H1 (cell line): ENCODE measurements at regions of chr14 and their contacts with region 1.

Region 1: DNA sequence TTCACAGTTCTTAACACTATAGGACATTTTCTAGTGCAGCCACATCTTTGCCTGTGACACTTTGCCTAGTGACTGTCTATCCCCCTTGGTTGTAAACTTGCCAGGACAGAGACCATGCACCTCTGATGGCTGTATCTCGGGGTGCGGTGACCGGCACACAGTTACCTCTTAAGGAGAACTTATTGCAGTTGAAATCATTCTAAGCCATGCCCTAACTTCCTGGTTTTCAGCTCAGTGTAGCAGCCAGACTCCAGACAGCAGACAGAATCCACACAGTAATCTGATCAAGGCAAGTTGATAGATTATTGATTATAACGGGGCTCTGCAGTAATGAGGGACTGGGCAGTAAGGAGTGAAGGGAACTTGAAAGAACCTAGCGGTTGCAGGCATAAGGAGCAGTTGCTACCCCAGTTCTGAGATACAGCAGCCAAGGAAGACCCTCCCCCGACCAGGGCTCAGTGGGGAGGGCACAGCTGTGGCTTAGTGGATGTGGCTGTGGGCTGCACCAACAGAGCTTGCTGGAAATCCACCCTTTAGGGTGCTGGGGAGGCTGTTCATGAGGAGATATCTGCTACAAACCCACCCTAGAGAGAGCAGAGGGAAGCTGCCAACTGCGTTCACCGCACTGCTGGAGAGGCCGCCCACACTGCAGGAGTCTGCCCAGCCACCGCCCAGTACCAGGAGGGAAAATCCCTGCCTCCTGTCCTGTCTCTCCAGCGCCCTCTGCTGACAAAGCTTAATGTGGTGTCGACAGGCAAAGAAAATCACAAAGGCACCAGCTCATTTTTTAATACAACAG is 58.2 kb upstream of the BEGAIN start:
- DNase-seq: peak; percentile 54 to 97
- H3K4me3 ChIP-seq: peak overlapping the region in 2 of 4 experiments; percentile 11 to 40; a peak in 4 of 8 replicates
- H3K27ac ChIP-seq: no peak overlapping the region
- H3K4me1 ChIP-seq: peaks cover 0 to 7% (median 6%) of the 10 kb centered on the region in 4 experiments; a peak in 5 of 7 replicates
- H3K27me3 ChIP-seq: no peaks in the 10 kb centered on the region; a peak in 1 of 7 replicates
- CTCF ChIP-seq: peak; percentile 80 to 93 (median 85)
- EP300 ChIP-seq: no peak; a peak in 1 of 3 replicates
- POLR2A ChIP-seq: no peak
- RAD21 ChIP-seq: peak; percentile 89 to 94

Region 2: GRCh38 chr14:100392356-100392755 is 253.0 kb before region 1 on chr14:
- CTCF ChIA-PET with region 1: interaction called, 109 read pairs
- POLR2A ChIA-PET with region 1: no interaction called
- DNase-seq: no peak
- H3K4me3 ChIP-seq: no peak overlapping the region
- H3K27ac ChIP-seq: no peak overlapping the region
- H3K4me1 ChIP-seq: peaks cover 0 to 5% (median 0%) of the 10 kb centered on the region in 4 experiments; a peak in 1 of 7 replicates
- H3K27me3 ChIP-seq: no peaks in the 10 kb centered on the region
- CTCF ChIP-seq: no peak
- EP300 ChIP-seq: no peak
- POLR2A ChIP-seq: no peak
- RAD21 ChIP-seq: no peak

Region 3: GRCh38 chr14:100424504-100425418 is 220.6 kb before region 1 on chr14:
- CTCF ChIA-PET with region 1: interaction called, 12 read pairs
- POLR2A ChIA-PET with region 1: no interaction called
- DNase-seq: no peak
- H3K4me3 ChIP-seq: no peak overlapping the region
- H3K27ac ChIP-seq: no peak overlapping the region
- H3K4me1 ChIP-seq: peaks cover 0 to 8% (median 2%) of the 10 kb centered on the region in 4 experiments; a peak in 6 of 7 replicates
- H3K27me3 ChIP-seq: no peaks in the 10 kb centered on the region
- CTCF ChIP-seq: no peak
- EP300 ChIP-seq: no peak
- POLR2A ChIP-seq: no peak
- RAD21 ChIP-seq: no peak

Region 4: GRCh38 chr14:100524933-100525243 is 120.5 kb before region 1 on chr14:
- CTCF ChIA-PET with region 1: interaction called, 91 read pairs
- POLR2A ChIA-PET with region 1: interaction called, 4 read pairs
- DNase-seq: peak in 1 of 2 experiments; percentile 75
- H3K4me3 ChIP-seq: no peak overlapping the region
- H3K27ac ChIP-seq: no peak overlapping the region
- H3K4me1 ChIP-seq: peaks cover 2 to 8% (median 5%) of the 10 kb centered on the region in 4 experiments; a peak in 4 of 7 replicates
- H3K27me3 ChIP-seq: no peaks in the 10 kb centered on the region; a peak in 1 of 7 replicates
- CTCF ChIP-seq: peak; percentile 61 to 88 (median 67)
- EP300 ChIP-seq: no peak
- POLR2A ChIP-seq: no peak
- RAD21 ChIP-seq: peak; percentile 89 to 92

Region 5: GRCh38 chr14:100557658-100558057 is 87.7 kb before region 1 on chr14:
- CTCF ChIA-PET with region 1: interaction called, 19 read pairs
- POLR2A ChIA-PET with region 1: no interaction called
- DNase-seq: no peak
- H3K4me3 ChIP-seq: no peak overlapping the region
- H3K27ac ChIP-seq: no peak overlapping the region
- H3K4me1 ChIP-seq: peaks cover 0 to 19% (median 17%) of the 10 kb centered on the region in 4 experiments; a peak in 6 of 7 replicates
- H3K27me3 ChIP-seq: peaks cover 0 to 5% (median 2%) of the 10 kb centered on the region in 4 experiments; a peak in 3 of 7 replicates
- CTCF ChIP-seq: no peak
- EP300 ChIP-seq: no peak
- POLR2A ChIP-seq: no peak
- RAD21 ChIP-seq: no peak

Region 6: GRCh38 chr14:100628225-100628624 is 17.2 kb before region 1 on chr14:
- CTCF ChIA-PET with region 1: interaction called, 31 read pairs
- POLR2A ChIA-PET with region 1: no interaction called
- DNase-seq: no peak
- H3K4me3 ChIP-seq: no peak overlapping the region
- H3K27ac ChIP-seq: no peak overlapping the region
- H3K4me1 ChIP-seq: no peaks in the 10 kb centered on the region
- H3K27me3 ChIP-seq: peaks cover 0 to 2% (median under 1%) of the 10 kb centered on the region in 4 experiments; a peak in 3 of 7 replicates
- CTCF ChIP-seq: no peak
- EP300 ChIP-seq: no peak
- POLR2A ChIP-seq: no peak
- RAD21 ChIP-seq: no peak